ENCODE measurements at regions of chr7 and their contacts with region 1.

Region 1: GRCh38 chr7:5494683-5495561 is 71.3 kb upstream of the TNRC18 start:
- DNase-seq: peak; percentile 48
- ATAC-seq: peak; percentile 92
- H3K4me3 ChIP-seq: peak overlapping the region in 1 of 2 experiments; percentile 16; a peak in 1 of 4 replicates
- H3K27ac ChIP-seq: peak overlapping the region; percentile 54
- H3K4me1 ChIP-seq: peaks cover 8 to 22% of the 10 kb centered on the region in 2 experiments; a peak in 3 of 4 replicates
- H3K27me3 ChIP-seq: no peaks in the 10 kb centered on the region
- CTCF ChIP-seq: peak; percentile 90 to 95 (median 91)
- POLR2A ChIP-seq: no peak
- RAD21 ChIP-seq: peak; percentile 100

Region 2: GRCh38 chr7:5526100-5526905 is 31.4 kb after region 1 on chr7:
- CTCF ChIA-PET with region 1: interaction called, 4 read pairs
- POLR2A ChIA-PET with region 1: no interaction called
- RAD21 ChIA-PET with region 1: no interaction called
- intact Hi-C with region 1: loop called (anchors 2 kb)
- DNase-seq: no peak
- ATAC-seq: peak; percentile 4
- H3K4me3 ChIP-seq: no peak overlapping the region
- H3K27ac ChIP-seq: peak overlapping the region; percentile 75
- H3K4me1 ChIP-seq: peaks cover 3 to 34% of the 10 kb centered on the region in 2 experiments; a peak in 3 of 4 replicates
- H3K27me3 ChIP-seq: no peaks in the 10 kb centered on the region
- CTCF ChIP-seq: 0 out of 6 replicates have a peak, but pooled peaks of 1 of the 3 experiments have one; percentile 2
- POLR2A ChIP-seq: no peak
- RAD21 ChIP-seq: no peak

Region 3: GRCh38 chr7:5557920-5558401 is 63.0 kb after region 1 on chr7:
- CTCF ChIA-PET with region 1: no interaction called
- POLR2A ChIA-PET with region 1: interaction called, 4 read pairs
- RAD21 ChIA-PET with region 1: interaction called, 7 to 9 read pairs
- intact Hi-C with region 1: loop called (anchors 1 kb)
- DNase-seq: no peak
- ATAC-seq: no peak
- H3K4me3 ChIP-seq: no peak overlapping the region
- H3K27ac ChIP-seq: peak overlapping the region; percentile 95
- H3K4me1 ChIP-seq: peaks cover 46 to 79% of the 10 kb centered on the region in 2 experiments
- H3K27me3 ChIP-seq: no peaks in the 10 kb centered on the region
- CTCF ChIP-seq: no peak
- POLR2A ChIP-seq: no peak
- RAD21 ChIP-seq: no peak

Region 4: DNA sequence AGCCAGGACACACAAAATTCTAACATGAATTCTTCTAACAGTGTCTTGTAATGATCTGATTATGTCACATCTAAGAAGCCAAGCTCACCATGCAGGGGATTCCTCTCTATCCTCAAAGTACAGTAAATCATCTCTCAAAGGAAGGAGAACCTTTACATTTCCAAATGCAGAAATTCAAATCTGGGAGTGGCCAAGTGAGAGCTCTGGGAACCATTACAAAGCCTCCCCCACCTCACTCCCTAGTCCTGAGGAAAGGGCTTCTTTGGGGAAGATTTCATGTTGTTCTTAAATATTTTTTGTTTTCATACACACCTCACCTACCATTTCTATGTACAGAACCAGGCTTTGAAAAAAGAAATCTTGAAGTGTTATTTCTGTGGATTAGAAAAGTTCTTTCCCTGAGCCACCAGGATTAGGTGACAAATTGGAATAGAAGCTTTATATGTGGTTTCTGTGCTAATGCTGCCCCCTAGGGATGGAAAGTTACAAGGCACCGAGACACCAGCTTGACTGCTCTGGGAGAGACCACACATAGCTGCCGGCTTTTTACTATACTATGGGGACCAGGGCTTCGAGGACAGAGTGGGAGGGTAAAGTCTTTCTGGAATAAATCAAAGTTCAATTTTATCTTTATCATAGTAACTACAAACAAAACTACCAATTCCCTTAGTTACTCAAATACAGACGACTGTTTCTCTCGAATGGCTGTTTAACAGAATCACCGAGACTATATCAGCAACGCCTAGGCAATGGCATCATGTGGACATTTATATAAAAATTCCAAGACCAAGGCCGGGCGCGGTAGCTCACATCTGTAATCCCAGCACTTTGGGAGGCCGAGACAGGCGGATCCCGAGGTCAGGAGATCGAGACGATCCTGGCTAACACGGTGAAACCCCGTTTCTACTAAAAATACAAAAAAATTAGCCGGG is 170.4 kb after region 1 on chr7:
- CTCF ChIA-PET with region 1: interaction called, 37 read pairs
- POLR2A ChIA-PET with region 1: interaction called, 5 read pairs
- RAD21 ChIA-PET with region 1: interaction called in 1 of 2 experiments, 4 read pairs
- intact Hi-C with region 1: loop called (anchors 1 kb)
- DNase-seq: peak; percentile 62
- ATAC-seq: peak; percentile 93
- H3K4me3 ChIP-seq: no peak overlapping the region
- H3K27ac ChIP-seq: no peak overlapping the region
- H3K4me1 ChIP-seq: peaks cover 0 to 3% of the 10 kb centered on the region in 2 experiments; a peak in 1 of 4 replicates
- H3K27me3 ChIP-seq: no peaks in the 10 kb centered on the region
- CTCF ChIP-seq: peak; percentile 75 to 94 (median 92)
- POLR2A ChIP-seq: no peak
- RAD21 ChIP-seq: peak; percentile 96

Region 5: GRCh38 chr7:5677538-5678294 is 182.8 kb after region 1 on chr7:
- CTCF ChIA-PET with region 1: interaction called, 34 read pairs
- POLR2A ChIA-PET with region 1: no interaction called
- RAD21 ChIA-PET with region 1: no interaction called
- intact Hi-C with region 1: no loop called
- DNase-seq: peak; percentile 34
- ATAC-seq: peak; percentile 88
- H3K4me3 ChIP-seq: no peak overlapping the region
- H3K27ac ChIP-seq: no peak overlapping the region
- H3K4me1 ChIP-seq: peaks cover 0 to 6% of the 10 kb centered on the region in 2 experiments; a peak in 1 of 4 replicates
- H3K27me3 ChIP-seq: no peaks in the 10 kb centered on the region
- CTCF ChIP-seq: peak; percentile 72 to 80 (median 74)
- POLR2A ChIP-seq: no peak
- RAD21 ChIP-seq: peak; percentile 83

Region 6: GRCh38 chr7:6453734-6454133 is 958.8 kb after region 1 on chr7:
- CTCF ChIA-PET with region 1: no interaction called
- POLR2A ChIA-PET with region 1: no interaction called
- RAD21 ChIA-PET with region 1: no interaction called
- intact Hi-C with region 1: no loop called
- DNase-seq: peak; percentile 77
- ATAC-seq: peak; percentile 42
- H3K4me3 ChIP-seq: no peak overlapping the region
- H3K27ac ChIP-seq: no peak overlapping the region; the same call in 1 of the 2 replicates
- H3K4me1 ChIP-seq: peaks cover 18 to 62% of the 10 kb centered on the region in 2 experiments
- H3K27me3 ChIP-seq: no peaks in the 10 kb centered on the region
- CTCF ChIP-seq: no peak
- POLR2A ChIP-seq: no peak
- RAD21 ChIP-seq: no peak